ENCODE measurements at regions of chr12 and their contacts with region 1.

Region 1: DNA sequence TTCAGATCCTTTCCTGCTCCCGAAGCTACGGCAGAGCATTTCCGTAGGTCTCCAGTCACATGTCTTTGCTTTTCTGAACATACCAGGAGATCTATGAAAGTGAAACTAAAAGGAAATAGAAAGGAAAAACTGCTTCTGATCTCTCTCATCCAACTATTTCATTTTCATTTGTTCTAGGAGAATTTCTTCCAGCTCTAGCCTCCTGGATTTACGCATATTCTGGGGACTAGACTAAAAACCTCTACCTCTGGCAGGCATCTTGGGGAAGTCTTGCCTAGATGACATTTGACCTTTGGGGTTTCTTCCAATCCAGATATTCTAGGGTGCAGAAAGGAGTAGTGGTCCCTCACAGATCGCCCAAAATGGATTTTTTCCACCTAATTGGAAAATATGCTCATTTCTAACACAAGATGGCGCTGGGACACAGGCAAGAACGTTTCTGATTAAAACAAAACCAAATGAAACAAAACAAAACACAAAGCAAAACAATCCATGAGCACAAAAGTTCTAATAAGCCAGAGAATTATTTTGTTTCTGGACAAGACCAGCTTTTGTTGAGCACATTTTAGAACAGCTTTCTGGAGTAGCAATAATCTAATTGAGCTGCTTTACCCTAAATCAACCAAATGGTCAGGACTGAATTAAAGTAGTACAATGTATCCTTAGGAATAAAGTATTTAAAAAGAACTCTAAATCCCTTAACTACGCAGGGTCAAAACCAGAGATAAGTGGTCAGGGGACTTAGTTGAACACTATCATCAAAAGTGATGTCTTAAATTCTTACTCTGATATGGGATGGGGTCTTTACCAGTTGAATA is 12.3 kb upstream of the PARP11 start:
- DNase-seq: peak; percentile 56
- ATAC-seq: no peak
- H3K4me3 Mint-ChIP-seq: no peak overlapping the region
- H3K27ac Mint-ChIP-seq: no peak overlapping the region
- H3K4me1 Mint-ChIP-seq: peaks cover 5% of the 10 kb centered on the region
- H3K27me3 Mint-ChIP-seq: no peaks in the 10 kb centered on the region
- CTCF ChIP-seq: peak; percentile 96

Region 2: GRCh38 chr12:3777206-3777809 is 108.2 kb before region 1 on chr12:
- CTCF ChIA-PET with region 1: no interaction called
- POLR2A ChIA-PET with region 1: no interaction called
- intact Hi-C with region 1: no loop called
- DNase-seq: peak; percentile 12
- ATAC-seq: peak; percentile 64
- H3K4me3 Mint-ChIP-seq: no peak overlapping the region
- H3K27ac Mint-ChIP-seq: no peak overlapping the region
- H3K4me1 Mint-ChIP-seq: peaks cover 4% of the 10 kb centered on the region
- H3K27me3 Mint-ChIP-seq: no peaks in the 10 kb centered on the region
- CTCF ChIP-seq: peak; percentile 65

Region 3: DNA sequence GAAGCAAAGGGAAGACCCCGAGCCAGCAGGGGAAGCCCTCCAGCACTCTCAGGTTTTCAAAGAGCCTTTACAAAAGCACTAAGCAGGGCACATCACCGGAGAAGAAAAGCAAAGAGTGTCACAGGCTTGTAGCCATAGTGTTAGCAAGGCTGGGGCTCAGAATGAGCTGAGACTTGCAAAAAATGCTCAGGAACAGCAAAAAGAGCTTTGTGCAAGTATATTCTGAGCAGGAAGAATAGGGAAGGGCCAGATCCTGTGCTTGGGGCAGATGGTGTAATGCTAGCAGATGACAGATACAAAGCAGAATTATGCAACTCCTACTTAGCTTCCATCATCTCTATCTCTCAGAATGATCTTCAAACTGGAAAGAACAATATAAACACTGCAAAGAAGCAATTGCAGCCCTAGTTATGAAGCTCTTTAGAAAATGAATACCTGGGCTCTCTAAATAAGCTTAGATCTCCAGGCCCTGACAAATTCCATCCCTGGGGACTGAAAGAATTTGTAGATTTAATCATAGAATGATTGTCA is 11.4 kb after region 1 on chr12:
- CTCF ChIA-PET with region 1: interaction called, 54 read pairs
- POLR2A ChIA-PET with region 1: no interaction called
- intact Hi-C with region 1: no loop called
- DNase-seq: peak; percentile 7
- ATAC-seq: peak; percentile 7
- H3K4me3 Mint-ChIP-seq: no peak overlapping the region
- H3K27ac Mint-ChIP-seq: peak overlapping the region; percentile 86
- H3K4me1 Mint-ChIP-seq: peaks cover 34% of the 10 kb centered on the region
- H3K27me3 Mint-ChIP-seq: no peaks in the 10 kb centered on the region
- CTCF ChIP-seq: no peak

Region 4: GRCh38 chr12:3947781-3948180 is 62.3 kb after region 1 on chr12:
- CTCF ChIA-PET with region 1: interaction called, 13 read pairs
- POLR2A ChIA-PET with region 1: no interaction called
- intact Hi-C with region 1: no loop called
- DNase-seq: no peak
- ATAC-seq: peak; percentile 47
- H3K4me3 Mint-ChIP-seq: no peak overlapping the region
- H3K27ac Mint-ChIP-seq: peak overlapping the region; percentile 37
- H3K4me1 Mint-ChIP-seq: peaks cover 46% of the 10 kb centered on the region
- H3K27me3 Mint-ChIP-seq: no peaks in the 10 kb centered on the region
- CTCF ChIP-seq: no peak

Region 5: DNA sequence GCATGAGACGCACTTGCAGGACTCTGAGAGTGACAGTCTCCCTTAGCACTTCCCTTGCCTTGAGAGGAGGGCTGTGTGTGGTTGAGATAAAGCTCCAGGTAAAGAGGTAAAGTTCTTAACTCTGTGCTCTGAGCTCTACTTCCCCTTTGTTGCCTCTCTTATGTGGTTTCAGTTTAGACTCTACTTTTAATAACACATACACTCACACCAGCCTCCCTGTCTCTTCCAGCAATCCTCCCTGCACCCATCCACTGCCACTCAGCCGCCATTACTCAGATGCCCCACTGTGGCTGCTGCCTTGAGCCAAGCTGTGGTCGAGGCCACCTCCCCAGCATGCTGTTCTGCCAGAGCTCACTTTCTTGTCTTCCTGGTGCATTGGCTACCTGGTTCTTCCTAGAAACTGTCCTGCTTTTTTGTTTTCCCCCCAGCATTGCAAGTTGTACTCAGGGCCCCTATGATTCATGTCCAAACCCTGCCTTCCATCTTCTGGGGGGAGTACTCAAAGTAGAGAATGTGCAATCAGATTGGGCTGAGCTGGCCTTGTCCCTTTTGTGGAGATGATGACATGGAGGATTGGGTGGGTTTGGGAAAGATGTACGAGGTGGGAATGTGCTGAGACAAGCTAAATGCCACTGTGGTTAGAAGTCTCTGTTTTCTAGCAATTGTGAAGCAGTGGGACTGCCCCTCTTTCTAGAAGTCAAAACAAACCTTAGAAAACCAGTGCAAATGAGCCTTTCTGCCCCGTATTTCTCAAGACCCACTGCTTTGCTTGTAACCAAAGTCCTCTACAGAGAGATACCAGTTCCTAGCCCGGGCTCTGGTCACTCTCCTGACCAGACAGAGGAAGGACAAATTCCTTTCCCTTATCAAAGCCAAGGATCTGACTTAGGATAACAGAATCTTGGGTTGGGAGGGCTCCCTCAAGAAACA is 103.3 kb after region 1 on chr12:
- CTCF ChIA-PET with region 1: interaction called, 124 read pairs
- POLR2A ChIA-PET with region 1: interaction called, 3 read pairs
- intact Hi-C with region 1: loop called (anchors 5 kb)
- DNase-seq: peak; percentile 67
- ATAC-seq: peak; percentile 78
- H3K4me3 Mint-ChIP-seq: peak overlapping the region; percentile 58
- H3K27ac Mint-ChIP-seq: peak overlapping the region; percentile 85
- H3K4me1 Mint-ChIP-seq: peaks cover 32% of the 10 kb centered on the region
- H3K27me3 Mint-ChIP-seq: no peaks in the 10 kb centered on the region
- CTCF ChIP-seq: no peak

Region 6: DNA sequence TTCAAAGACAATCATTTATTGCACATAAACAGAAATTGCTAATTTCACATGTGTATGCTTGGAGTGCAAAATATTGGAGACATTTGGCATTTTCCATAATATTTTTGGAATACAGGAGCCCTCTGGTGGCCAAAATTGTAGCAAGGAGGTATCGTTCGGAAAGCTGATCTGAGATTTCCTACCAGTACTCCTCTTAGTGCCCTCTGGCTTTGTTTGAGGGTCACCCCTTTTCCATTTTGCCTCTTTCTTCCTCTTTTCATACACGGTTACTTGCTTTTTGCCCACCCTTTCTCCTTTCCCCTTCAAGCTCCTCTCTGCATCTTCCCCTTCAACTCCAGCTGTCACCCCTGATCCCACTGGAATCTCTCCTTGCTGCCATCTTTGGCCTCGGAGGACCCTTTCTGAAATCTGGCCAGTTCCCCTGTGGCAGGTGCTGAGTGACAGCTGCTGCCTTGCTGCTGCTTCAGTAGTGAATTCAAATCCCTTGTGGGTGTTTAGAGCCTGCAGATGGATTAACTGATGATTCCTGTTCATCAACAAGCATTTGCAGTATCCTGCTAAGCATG is 152.3 kb after region 1 on chr12:
- CTCF ChIA-PET with region 1: interaction called, 70 read pairs
- POLR2A ChIA-PET with region 1: no interaction called
- intact Hi-C with region 1: loop called (anchors 10 kb)
- DNase-seq: peak; percentile 31
- ATAC-seq: no peak
- H3K4me3 Mint-ChIP-seq: no peak overlapping the region
- H3K27ac Mint-ChIP-seq: no peak overlapping the region
- H3K4me1 Mint-ChIP-seq: peaks cover 3% of the 10 kb centered on the region
- H3K27me3 Mint-ChIP-seq: no peaks in the 10 kb centered on the region
- CTCF ChIP-seq: peak; percentile 55

Region 7: DNA sequence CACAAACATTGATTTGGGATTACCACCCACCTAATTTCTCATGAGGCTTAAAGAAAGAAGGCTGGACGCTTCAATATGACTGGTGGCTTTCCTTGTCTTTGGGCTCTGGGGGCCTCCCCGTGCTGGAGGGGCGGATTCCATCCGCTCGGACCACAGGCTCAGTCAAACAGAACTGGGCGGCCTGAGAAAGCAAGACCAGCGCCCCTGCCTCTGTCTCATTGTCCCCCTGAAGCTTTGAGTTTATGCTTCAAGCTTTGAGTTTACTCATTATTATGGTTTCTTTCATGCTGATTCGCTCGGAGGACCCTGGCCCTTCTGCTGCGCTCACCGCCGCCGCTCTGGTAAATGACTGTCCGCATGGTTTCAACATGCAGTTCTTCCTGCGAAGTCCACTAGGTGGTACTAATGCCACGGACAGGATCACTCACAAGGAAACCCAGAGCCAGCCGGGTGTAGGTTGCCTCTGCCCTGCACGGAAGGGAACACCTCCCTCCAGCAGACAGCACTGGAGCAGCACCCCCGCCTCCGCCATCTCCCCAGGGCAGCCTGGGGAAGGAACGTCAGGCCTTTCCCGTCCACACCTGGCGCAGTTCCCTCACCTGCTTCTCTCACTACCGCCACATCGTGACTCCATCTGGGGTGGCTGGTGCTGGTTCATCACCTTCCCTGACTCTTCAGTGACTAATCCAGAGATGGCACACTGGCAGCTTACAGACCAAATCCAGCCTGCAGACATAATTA is 422.3 kb after region 1 on chr12:
- CTCF ChIA-PET with region 1: interaction called, 12 read pairs
- POLR2A ChIA-PET with region 1: no interaction called
- intact Hi-C with region 1: no loop called
- DNase-seq: no peak
- ATAC-seq: peak; percentile 54
- H3K4me3 Mint-ChIP-seq: no peak overlapping the region
- H3K27ac Mint-ChIP-seq: peak overlapping the region; percentile 60
- H3K4me1 Mint-ChIP-seq: no peaks in the 10 kb centered on the region
- H3K27me3 Mint-ChIP-seq: no peaks in the 10 kb centered on the region
- CTCF ChIP-seq: no peak